Aorta (tissue), 5 donors: ENCODE measurements at regions of chr1 and their contacts with region 1.

Region 1: DNA sequence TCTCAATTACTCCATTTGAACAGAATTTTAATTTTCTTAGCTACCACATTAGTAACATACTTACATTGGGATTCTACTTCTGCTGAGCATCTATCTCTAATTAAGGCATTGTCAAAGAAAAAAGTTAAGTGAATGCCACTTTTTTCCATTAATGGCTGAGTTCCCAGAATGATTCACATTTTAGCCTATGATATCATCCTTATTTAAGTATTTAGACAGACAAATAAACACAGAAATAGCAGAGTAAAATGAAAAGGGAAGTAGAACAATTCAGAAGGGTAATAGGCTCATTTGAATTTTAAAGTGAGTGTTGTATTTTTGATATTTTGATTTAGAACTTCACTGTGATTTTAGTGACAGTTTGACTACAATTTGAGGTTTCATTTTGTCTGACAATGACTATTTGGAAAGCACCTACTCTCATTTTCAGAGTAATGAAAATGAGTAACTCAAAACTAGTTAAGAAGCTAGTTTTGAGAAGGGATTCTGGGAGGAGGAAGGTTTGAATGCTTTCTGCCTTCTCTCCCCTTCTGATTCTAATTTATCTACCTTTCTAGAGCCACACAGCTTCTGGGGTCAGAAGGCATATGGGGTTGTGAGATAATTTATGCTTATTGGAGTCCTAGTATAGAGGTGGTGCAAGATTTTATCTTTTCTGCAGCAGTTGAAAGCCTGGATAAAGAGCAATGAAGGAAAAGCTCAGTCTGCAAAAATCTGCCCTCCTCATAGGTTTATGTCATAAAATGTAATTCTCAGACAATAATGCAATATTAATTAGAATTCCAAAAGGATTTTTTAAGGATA is 15.5 kb downstream of the LYPLAL1 start:
- DNase-seq: no peak
- ATAC-seq: no peak
- H3K4me3 ChIP-seq: peak overlapping the region in 1 of 2 donors; percentile 18
- H3K27ac ChIP-seq: peak overlapping the region; percentile 48 to 96
- H3K4me1 ChIP-seq: peaks cover 2 to 3% of the 10 kb centered on the region in 2 donors
- H3K27me3 ChIP-seq: no peaks in the 10 kb centered on the region

Region 2: GRCh38 chr1:219298571-219299148 is 109.4 kb after region 1 on chr1:
- intact Hi-C with region 1: loop called in 1 of 2 experiments (anchors 5 kb)
- DNase-seq: no peak
- ATAC-seq: peak; percentile 57
- H3K4me3 ChIP-seq: no peak overlapping the region
- H3K27ac ChIP-seq: peak overlapping the region; percentile 23 to 87
- H3K4me1 ChIP-seq: peaks cover 0 to 10% of the 10 kb centered on the region in 2 donors
- H3K27me3 ChIP-seq: no peaks in the 10 kb centered on the region

Region 3: GRCh38 chr1:219422811-219423598 is 233.8 kb after region 1 on chr1:
- intact Hi-C with region 1: no loop called
- DNase-seq: no peak
- ATAC-seq: no peak
- H3K4me3 ChIP-seq: no peak overlapping the region
- H3K27ac ChIP-seq: no peak overlapping the region
- H3K4me1 ChIP-seq: no peaks in the 10 kb centered on the region
- H3K27me3 ChIP-seq: no peaks in the 10 kb centered on the region